OCI-LY7 (cell line): ENCODE measurements at regions of chr5 and their contacts with region 1.

Region 1: DNA sequence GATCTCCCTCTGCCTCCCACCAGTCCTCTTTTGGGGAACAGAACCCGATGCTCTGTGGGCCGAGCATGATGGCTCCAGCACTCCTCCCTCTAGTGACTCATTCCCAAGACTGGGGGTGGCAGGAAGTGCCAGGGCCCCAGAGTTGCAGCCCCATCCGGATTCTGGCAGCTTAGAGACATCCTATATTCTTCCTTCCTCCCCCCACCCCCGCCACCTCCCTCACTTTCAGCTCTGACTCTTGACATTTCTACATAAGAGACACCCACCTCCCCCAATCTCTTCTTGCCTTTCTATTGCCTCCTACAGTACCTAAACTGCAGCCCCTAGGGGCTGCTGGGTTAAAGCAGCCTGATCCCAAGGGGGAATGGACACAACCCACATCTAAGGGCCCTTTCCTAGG is 47.1 kb upstream of the MATR3 start:
- DNase-seq: no peak
- H3K4me3 ChIP-seq: no peak overlapping the region
- H3K27ac ChIP-seq: no peak overlapping the region
- H3K4me1 ChIP-seq: peaks cover 4% of the 10 kb centered on the region
- CTCF ChIP-seq: no peak

Region 2: GRCh38 chr5:139043157-139043905 is 203.1 kb before region 1 on chr5:
- CTCF ChIA-PET with region 1: no interaction called
- POLR2A ChIA-PET with region 1: no interaction called
- intact Hi-C with region 1: no loop called
- DNase-seq: no peak
- H3K4me3 ChIP-seq: no peak overlapping the region
- H3K27ac ChIP-seq: no peak overlapping the region
- H3K4me1 ChIP-seq: no peaks in the 10 kb centered on the region
- CTCF ChIP-seq: no peak

Region 3: GRCh38 chr5:139341650-139342422 is 95.4 kb after region 1 on chr5 and contains the start of gene PAIP2:
- CTCF ChIA-PET with region 1: no interaction called
- POLR2A ChIA-PET with region 1: interaction called, 3 read pairs
- intact Hi-C with region 1: loop called (anchors 1 kb)
- DNase-seq: peak; percentile 97
- H3K4me3 ChIP-seq: peak within 1 kb of the TSS; percentile 88
- H3K27ac ChIP-seq: peak within 1 kb of the TSS; percentile 92
- H3K4me1 ChIP-seq: peaks cover 30% of the 10 kb centered on the region
- CTCF ChIP-seq: peak; percentile 79
- total RNA-seq, gene PAIP2: 64.3 and 73.6 TPM in 2 replicates